ENCODE measurements at regions of chr5 and their contacts with region 1.

Region 1: GRCh38 chr5:150486402-150487198 is 21.3 kb upstream of the NDST1 start:
- DNase-seq: peak; percentile 66
- H3K4me3 ChIP-seq: peak overlapping the region; percentile 60 to 97 (median 88)
- H3K27ac ChIP-seq: no peak overlapping the region
- H3K4me1 ChIP-seq: peaks cover 39% of the 10 kb centered on the region
- H3K27me3 ChIP-seq: no peaks in the 10 kb centered on the region
- CTCF ChIP-seq: no peak
- POLR2A ChIP-seq: no peak

Region 2: DNA sequence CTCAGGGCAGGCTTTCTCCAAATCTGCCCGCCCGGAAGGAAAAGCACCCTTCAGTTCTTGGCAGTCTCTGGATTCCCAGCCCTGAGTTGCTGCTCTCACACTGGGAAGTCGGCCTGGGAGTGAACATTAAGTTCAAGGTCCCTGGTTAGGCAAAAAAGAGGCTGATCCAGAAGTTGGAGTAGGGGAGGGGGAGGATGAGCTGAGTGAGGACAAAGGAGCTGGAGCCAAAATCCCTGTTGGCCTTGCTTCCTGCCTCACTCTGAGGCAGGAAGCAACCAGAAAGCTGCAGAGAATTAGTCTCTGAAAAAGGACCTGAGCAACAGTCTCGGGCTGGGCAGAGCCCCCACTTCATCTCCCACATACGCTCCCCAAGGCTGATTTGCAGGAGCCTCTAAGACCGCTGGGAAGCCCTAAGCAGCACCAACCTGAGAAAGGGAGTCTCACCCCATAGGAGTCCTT is 22.0 kb before region 1 on chr5:
- CTCF ChIA-PET with region 1: interaction called, 3 read pairs
- POLR2A ChIA-PET with region 1: no interaction called
- dilution Hi-C with region 1: no loop called
- intact Hi-C with region 1: loop called (anchors 2 kb)
- DNase-seq: peak; percentile 28
- H3K4me3 ChIP-seq: no peak overlapping the region
- H3K27ac ChIP-seq: no peak overlapping the region
- H3K4me1 ChIP-seq: peaks cover 21% of the 10 kb centered on the region
- H3K27me3 ChIP-seq: no peaks in the 10 kb centered on the region
- CTCF ChIP-seq: no peak
- POLR2A ChIP-seq: no peak

Region 3: DNA sequence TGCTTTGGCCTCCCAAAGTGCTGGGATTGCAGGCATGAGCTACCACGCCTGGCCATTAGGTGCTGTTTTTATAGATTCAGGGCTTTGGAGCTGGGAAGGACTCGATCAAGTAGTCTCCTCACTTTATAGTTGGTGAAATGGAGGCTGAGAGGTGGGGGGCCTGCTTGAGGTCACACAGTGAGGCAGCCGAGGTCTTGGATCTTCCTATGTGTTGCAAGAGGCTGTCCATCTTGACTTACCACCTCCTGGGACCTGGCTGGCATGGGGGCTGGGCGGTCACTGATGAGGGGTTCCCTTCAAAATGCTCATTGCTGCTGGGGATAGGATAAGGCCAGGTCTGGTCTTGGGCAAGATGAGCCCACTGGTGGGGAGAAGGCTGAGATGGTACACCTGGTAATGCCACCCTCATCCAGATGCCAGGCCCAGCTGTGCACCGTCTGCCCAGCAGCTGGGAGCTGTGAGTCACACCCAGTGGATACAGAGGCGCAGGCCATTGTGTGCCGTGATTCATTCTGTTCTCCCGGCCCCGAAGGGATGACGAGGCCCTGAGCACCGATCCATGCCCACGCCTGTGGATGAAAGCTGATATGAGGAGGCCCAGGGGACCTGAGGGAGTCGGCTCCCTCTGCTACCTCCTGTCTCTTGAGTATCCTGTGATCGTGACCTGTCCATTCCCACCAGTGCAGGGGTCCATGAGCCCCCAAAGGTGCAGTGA is 10.8 kb after region 1 on chr5:
- CTCF ChIA-PET with region 1: interaction called, 6 read pairs
- POLR2A ChIA-PET with region 1: interaction called, 4 read pairs
- dilution Hi-C with region 1: no loop called
- intact Hi-C with region 1: loop called (anchors 1 kb)
- DNase-seq: peak; percentile 92
- H3K4me3 ChIP-seq: no peak overlapping the region
- H3K27ac ChIP-seq: peak overlapping the region; percentile 31
- H3K4me1 ChIP-seq: peaks cover 26% of the 10 kb centered on the region
- H3K27me3 ChIP-seq: no peaks in the 10 kb centered on the region
- CTCF ChIP-seq: no peak
- POLR2A ChIP-seq: no peak

Region 4: DNA sequence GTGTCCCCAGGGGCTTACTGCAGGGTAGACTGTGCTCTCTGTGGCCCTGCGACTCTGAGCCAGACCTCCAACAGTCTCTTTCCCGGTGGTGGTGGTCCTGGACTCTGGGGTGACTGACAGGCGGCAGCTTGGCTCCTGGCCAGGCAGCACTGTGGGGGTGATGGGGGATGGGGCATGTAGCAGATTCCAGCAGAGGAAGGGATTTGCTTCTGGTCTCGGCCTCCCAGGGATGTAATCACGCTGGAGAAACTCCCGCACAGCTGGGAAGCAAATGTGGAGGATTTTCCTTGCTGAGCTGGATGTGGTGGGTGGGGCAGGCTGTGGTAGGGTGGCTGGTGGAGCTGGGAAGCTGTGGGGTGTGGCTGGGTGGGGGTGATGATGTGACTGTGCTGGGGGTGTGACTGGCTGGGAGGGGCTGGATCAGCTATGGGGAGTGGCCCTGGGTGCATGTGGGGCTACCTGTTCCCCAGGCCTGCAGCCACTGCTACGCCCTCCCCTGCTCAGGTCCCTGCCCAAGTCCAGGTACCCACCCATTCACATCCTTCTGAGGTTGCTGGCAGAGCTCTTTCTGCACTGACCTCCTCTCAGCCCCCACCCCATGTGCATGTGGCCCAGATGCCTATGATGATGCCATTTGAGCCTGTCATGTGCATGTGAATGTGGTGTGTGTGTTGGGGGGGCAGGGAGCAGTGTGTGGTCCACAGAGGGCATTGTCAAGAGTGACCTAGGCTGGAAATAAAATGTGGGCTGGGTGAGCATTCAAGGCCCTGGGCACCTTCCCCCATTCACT is 25.2 kb after region 1 on chr5:
- CTCF ChIA-PET with region 1: interaction called, 10 read pairs
- POLR2A ChIA-PET with region 1: interaction called, 3 read pairs
- dilution Hi-C with region 1: no loop called
- intact Hi-C with region 1: loop called (anchors 1 kb)
- DNase-seq: no peak
- H3K4me3 ChIP-seq: no peak overlapping the region
- H3K27ac ChIP-seq: no peak overlapping the region
- H3K4me1 ChIP-seq: peaks cover 48% of the 10 kb centered on the region
- H3K27me3 ChIP-seq: no peaks in the 10 kb centered on the region
- CTCF ChIP-seq: no peak
- POLR2A ChIP-seq: no peak

Region 5: DNA sequence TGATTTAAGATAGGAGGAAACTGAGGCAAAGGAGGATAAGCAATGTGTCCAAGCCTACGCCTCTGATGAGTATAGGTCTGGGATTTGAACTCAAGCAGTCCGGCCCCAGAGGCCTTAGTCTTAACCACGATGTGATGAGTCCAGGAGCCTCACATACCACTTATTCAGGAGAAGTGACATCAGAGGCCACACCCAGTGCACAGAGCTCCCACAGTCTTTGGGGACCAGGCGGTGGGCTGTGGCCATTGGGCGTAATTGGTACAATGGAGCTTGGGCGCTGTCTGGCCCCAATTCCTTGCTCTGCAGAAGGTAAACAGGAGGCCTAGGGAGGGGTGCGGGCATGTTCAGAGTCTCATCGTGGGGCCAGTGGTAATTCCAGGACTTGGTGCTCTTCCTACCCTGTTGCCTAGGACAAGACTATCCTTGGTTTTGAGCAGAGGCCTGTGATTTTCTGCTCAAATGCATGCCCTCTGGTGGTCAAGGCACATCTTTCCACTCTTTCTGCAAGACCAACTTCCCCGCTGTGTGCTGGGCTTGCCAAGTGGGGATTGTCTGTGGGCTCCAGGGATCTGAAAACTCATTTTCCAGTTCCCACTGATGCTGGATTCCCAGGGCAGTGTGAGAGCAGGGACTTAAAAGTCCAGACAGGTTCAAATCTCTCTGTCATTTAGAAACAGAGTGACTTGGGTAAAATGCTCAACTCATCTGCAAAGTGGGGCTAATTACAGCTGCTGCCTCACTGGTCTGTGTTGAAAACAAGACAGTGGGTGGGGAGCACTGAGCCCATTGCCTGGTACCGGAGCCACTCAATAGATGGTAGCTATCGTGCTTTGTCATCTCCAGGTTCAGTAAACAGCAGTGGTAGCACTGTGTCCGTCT is 37.1 kb after region 1 on chr5:
- CTCF ChIA-PET with region 1: interaction called, 32 read pairs
- POLR2A ChIA-PET with region 1: no interaction called
- dilution Hi-C with region 1: no loop called
- intact Hi-C with region 1: loop called (anchors 1 kb)
- DNase-seq: peak; percentile 69
- H3K4me3 ChIP-seq: no peak overlapping the region
- H3K27ac ChIP-seq: no peak overlapping the region
- H3K4me1 ChIP-seq: no peaks in the 10 kb centered on the region
- H3K27me3 ChIP-seq: no peaks in the 10 kb centered on the region
- CTCF ChIP-seq: peak; percentile 67 to 80
- POLR2A ChIP-seq: no peak

Region 6: GRCh38 chr5:150544611-150545219 is 58.1 kb after region 1 on chr5:
- CTCF ChIA-PET with region 1: interaction called, 5 read pairs
- POLR2A ChIA-PET with region 1: no interaction called
- dilution Hi-C with region 1: no loop called
- intact Hi-C with region 1: loop called (anchors 2 kb)
- DNase-seq: peak; percentile 69
- H3K4me3 ChIP-seq: no peak overlapping the region
- H3K27ac ChIP-seq: no peak overlapping the region
- H3K4me1 ChIP-seq: peaks cover 20% of the 10 kb centered on the region
- H3K27me3 ChIP-seq: no peaks in the 10 kb centered on the region
- CTCF ChIP-seq: peak; percentile 95 to 97
- POLR2A ChIP-seq: no peak

Measured in endothelial cell of umbilical vein (primary cell).